Naive thymus-derived CD8-positive, alpha-beta T cell (primary cell): ENCODE measurements at regions of chr11 and their contacts with region 1.

Region 1: GRCh38 chr11:102317099-102317767 is at the start of gene BIRC3:
- DNase-seq: peak; percentile 71 to 96 (median 92)
- ATAC-seq: peak; percentile 88 to 92
- H3K4me3 Mint-ChIP-seq: peak within 1 kb of the TSS; percentile 88 to 99 (median 96)
- H3K27ac Mint-ChIP-seq: peak within 1 kb of the TSS; percentile 95 to 100 (median 99)
- H3K4me1 Mint-ChIP-seq: peaks cover 28 to 80% (median 73%) of the 10 kb centered on the region in 4 donors
- H3K27me3 Mint-ChIP-seq: no peaks in the 10 kb centered on the region
- polyA plus RNA-seq, gene BIRC3: 16.7 to 22.9 (median 19.1) TPM

Region 2: DNA sequence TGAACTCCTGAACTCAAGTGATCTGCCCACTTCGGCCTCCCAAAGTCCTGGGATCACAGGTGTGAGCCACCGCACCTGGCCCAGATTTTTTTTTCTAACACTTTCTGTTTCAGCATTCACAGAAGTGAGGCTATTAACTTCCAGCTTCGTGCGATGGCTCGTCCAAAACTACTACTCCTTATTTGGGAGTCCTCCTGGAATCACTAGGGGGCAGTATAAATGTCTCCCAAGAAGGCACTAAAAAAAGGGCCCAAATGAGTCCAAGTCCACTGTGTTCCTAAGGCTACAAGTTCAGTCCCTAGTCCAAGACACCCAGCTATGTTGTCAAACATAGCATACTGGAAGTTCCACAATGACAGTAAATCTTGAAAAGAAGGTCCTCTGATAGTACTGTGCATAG is 63.2 kb before region 1 on chr11:
- POLR2A ChIA-PET with region 1: no interaction called
- DNase-seq: no peak
- ATAC-seq: no peak
- H3K4me3 Mint-ChIP-seq: no peak overlapping the region
- H3K27ac Mint-ChIP-seq: no peak overlapping the region
- H3K4me1 Mint-ChIP-seq: no peaks in the 10 kb centered on the region
- H3K27me3 Mint-ChIP-seq: no peaks in the 10 kb centered on the region

Region 3: DNA sequence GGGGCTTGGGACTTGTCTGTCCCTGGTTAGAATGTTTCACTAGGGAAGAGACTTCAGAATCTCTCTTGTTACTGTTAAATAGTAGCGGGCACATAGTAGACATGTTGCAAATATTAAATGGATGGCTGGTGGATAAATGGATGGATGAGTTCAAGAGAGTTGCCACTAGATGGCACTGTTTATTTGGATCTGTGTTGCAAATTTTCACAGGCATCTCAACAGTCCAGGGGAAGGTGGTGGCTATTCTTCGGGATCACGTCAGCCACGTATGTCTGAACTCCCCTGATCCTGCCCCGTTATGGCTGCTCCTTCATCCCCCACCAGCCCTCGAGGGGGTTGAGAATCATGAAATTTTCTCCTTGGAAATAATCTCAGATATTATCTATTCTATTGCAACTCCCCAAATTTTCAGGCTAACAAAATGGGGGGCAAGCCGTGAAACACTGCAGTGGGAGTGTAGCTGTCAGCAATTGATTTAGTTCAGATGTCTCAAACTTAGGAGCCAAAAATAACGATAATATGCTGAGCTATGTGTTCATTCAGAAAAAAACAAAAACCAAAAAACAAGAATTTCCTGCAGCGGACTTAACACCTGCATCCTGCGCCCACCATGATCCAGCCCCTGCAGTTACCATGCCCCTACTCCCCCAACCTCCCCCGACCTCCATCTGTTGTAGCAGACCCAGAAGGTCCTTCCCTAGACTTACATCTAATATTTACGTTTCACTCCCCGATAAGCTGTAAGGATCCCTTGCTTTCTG is 29.1 kb before region 1 on chr11:
- POLR2A ChIA-PET with region 1: interaction called, 73 read pairs
- DNase-seq: peak in 8 of 10 donors; percentile 11 to 70 (median 34)
- ATAC-seq: peak; percentile 83 to 91
- H3K4me3 Mint-ChIP-seq: peak overlapping the region; percentile 30 to 72 (median 48)
- H3K27ac Mint-ChIP-seq: peak overlapping the region in 6 of 10 donors; percentile 3 to 73 (median 44)
- H3K4me1 Mint-ChIP-seq: peaks cover 2 to 29% (median 9%) of the 10 kb centered on the region in 4 donors
- H3K27me3 Mint-ChIP-seq: no peaks in the 10 kb centered on the region

Region 4: DNA sequence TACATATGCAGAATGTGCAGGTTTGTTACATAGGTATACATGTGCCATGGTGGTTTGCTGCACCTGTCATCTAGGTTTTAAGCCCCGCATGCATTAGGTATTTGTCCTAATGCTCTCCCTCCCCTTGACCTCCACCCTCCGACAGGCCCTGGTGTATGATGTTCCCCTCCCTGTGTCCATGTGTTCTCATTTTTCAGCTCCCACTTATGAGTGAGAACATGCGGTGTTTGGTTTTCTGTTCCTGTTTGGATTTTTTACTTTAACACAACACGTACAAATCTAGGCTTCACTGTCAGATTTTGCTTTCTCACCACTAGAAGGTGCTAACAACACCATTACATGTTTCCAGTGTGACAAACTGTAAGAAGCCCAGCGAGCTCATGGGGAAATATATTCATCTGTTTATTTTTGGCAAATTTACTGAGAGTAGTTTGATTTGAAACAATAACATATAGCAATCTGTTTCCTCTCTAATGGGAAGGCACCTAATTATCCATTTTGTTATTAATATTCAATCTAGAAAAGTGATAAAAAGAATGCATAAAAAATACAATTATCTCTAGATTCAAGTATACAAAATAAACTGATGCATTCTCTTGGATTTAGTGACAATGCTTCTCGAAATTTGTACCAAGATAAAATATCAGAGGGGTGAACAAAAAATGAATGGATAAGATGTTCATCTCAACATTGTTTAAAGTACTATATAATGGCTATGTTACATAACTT is 23.2 kb before region 1 on chr11:
- POLR2A ChIA-PET with region 1: interaction called, 73 read pairs
- DNase-seq: peak in 4 of 10 donors; percentile 26 to 66 (median 64)
- ATAC-seq: peak; percentile 97
- H3K4me3 Mint-ChIP-seq: peak overlapping the region; percentile 67 to 95 (median 86)
- H3K27ac Mint-ChIP-seq: peak overlapping the region; percentile 72 to 95 (median 92)
- H3K4me1 Mint-ChIP-seq: peaks cover 10 to 52% (median 16%) of the 10 kb centered on the region in 4 donors
- H3K27me3 Mint-ChIP-seq: peaks cover 0 to 2% (median 0%) of the 10 kb centered on the region in 5 donors

Region 5: GRCh38 chr11:102306048-102306585 is 11.1 kb before region 1 on chr11:
- POLR2A ChIA-PET with region 1: interaction called, 73 read pairs
- DNase-seq: no peak
- ATAC-seq: peak; percentile 29 to 37
- H3K4me3 Mint-ChIP-seq: peak overlapping the region; percentile 16 to 79 (median 60)
- H3K27ac Mint-ChIP-seq: peak overlapping the region; percentile 81 to 98 (median 92)
- H3K4me1 Mint-ChIP-seq: peaks cover 33 to 78% (median 57%) of the 10 kb centered on the region in 4 donors
- H3K27me3 Mint-ChIP-seq: no peaks in the 10 kb centered on the region

Region 6: GRCh38 chr11:102361086-102362031 is 44.1 kb after region 1 on chr11:
- POLR2A ChIA-PET with region 1: no interaction called
- DNase-seq: peak; percentile 17 to 81 (median 68)
- ATAC-seq: peak; percentile 80 to 82
- H3K4me3 Mint-ChIP-seq: peak overlapping the region; percentile 72 to 87 (median 77)
- H3K27ac Mint-ChIP-seq: peak overlapping the region; percentile 94 to 99 (median 96)
- H3K4me1 Mint-ChIP-seq: peaks cover 32 to 71% (median 63%) of the 10 kb centered on the region in 4 donors
- H3K27me3 Mint-ChIP-seq: no peaks in the 10 kb centered on the region